Left cardiac atrium (tissue), 4 donors: ENCODE measurements at regions of chr2 and their contacts with region 1.

Region 1: GRCh38 chr2:24977631-24978030 is 5.9 kb upstream of the DNAJC27 start:
- DNase-seq: no peak
- ATAC-seq: no peak

Region 2: GRCh38 chr2:24930768-24931167 is 46.9 kb before region 1 on chr2:
- intact Hi-C with region 1: no loop called
- DNase-seq: no peak
- ATAC-seq: peak in 1 of 2 donors; percentile 47

Region 3: DNA sequence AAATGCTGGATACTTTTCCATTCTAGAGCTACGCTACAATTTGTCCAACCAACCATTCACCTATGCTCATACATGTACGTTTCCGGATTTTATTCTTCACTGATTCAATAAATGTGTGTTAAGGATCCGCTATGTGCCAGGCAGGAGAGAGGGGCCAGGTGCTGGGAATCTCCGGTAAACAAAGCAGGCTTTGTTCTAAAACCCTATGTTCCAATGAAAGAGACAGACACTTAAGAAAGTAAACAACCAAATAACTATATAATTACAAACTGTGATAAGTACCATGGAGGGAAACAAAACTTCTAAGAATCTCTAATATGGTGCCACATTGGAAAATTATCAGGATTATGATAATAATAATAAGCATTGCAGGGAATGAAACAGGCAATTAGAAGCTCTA is 212.9 kb after region 1 on chr2:
- intact Hi-C with region 1: loop called in 1 of 2 experiments (anchors 5 kb)
- DNase-seq: no peak
- ATAC-seq: no peak